CD4-positive, alpha-beta T cell (primary cell): ENCODE measurements at regions of chr11 and their contacts with region 1.

Region 1: DNA sequence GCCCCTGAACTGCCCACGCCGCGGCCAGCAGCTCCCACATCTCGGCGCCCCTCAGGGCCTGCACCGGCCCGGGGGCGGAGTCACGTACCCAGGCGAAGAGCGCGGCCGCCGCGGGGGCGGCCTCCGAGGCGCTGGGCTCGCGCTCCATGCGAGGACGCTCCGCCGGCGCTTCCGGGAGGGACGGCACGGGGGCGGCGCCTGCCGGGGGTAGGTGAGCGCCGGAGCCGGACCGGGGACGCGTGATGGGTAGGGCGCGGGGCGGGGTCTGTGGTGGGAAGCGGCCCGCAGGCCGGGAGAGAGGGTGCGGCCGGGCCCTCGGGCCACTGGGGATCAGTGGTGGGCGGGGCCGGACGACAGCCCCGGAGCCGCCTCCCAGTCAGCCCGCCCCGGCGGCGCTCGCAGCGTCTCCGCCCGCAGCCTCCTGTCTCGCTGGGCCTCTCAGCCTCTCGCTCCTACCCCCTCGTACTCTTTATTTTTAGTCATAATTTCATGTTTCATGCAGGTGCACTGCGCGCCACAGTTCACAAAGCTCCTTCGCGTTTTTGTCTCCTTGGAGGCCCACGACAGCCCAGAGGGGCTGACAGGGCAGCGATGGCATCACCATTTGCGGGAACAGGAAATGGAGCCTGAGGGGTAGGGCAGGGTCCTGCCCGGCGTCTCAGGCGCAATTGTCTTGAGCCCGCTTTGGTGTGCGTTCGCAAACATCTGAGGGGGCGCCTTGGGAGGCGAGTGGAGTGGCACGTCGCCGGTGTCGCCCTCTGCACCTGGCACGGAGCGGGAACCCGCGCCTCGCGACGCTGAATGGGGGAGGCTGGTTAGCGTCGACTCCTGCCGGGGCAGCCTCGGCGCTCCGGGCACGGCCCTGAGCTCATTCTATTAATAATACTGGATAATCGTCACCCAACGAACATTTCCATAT is at the start of gene SERGEF:
- DNase-seq: peak; percentile 79 to 97 (median 93)
- ATAC-seq: peak; percentile 80
- H3K4me3 ChIP-seq: peak within 1 kb of the TSS; percentile 98
- H3K4me3 Mint-ChIP-seq: peak within 1 kb of the TSS; percentile 98
- H3K27ac ChIP-seq: peak within 1 kb of the TSS; percentile 82 to 83
- H3K27ac Mint-ChIP-seq: peak within 1 kb of the TSS; percentile 92
- H3K4me1 ChIP-seq: peaks cover 22% of the 10 kb centered on the region
- H3K4me1 Mint-ChIP-seq: peaks cover 33% of the 10 kb centered on the region
- H3K27me3 ChIP-seq: no peaks in the 10 kb centered on the region
- H3K27me3 Mint-ChIP-seq: no peaks in the 10 kb centered on the region
- CTCF ChIP-seq: no peak
- total RNA-seq, gene SERGEF: 35.2 to 37.1 TPM

Region 2: GRCh38 chr11:16738193-16738946 is 1274.8 kb before region 1 on chr11 and contains the start of gene C11orf58:
- CTCF ChIA-PET with region 1: no interaction called
- POLR2A ChIA-PET with region 1: no interaction called
- intact Hi-C with region 1: loop called in 1 of 2 experiments (anchors 10 kb)
- DNase-seq: peak; percentile 89 to 99 (median 93)
- ATAC-seq: peak; percentile 94
- H3K4me3 ChIP-seq: peak within 1 kb of the TSS; percentile 78
- H3K4me3 Mint-ChIP-seq: peak within 1 kb of the TSS; percentile 73
- H3K27ac ChIP-seq: peak within 1 kb of the TSS; percentile 94 to 98
- H3K27ac Mint-ChIP-seq: no peak within 1 kb of the TSS
- H3K4me1 ChIP-seq: peaks cover 36% of the 10 kb centered on the region
- H3K4me1 Mint-ChIP-seq: peaks cover 24% of the 10 kb centered on the region
- H3K27me3 ChIP-seq: no peaks in the 10 kb centered on the region
- H3K27me3 Mint-ChIP-seq: no peaks in the 10 kb centered on the region
- CTCF ChIP-seq: no peak
- total RNA-seq, gene C11orf58: 145 to 150 TPM

Region 3: DNA sequence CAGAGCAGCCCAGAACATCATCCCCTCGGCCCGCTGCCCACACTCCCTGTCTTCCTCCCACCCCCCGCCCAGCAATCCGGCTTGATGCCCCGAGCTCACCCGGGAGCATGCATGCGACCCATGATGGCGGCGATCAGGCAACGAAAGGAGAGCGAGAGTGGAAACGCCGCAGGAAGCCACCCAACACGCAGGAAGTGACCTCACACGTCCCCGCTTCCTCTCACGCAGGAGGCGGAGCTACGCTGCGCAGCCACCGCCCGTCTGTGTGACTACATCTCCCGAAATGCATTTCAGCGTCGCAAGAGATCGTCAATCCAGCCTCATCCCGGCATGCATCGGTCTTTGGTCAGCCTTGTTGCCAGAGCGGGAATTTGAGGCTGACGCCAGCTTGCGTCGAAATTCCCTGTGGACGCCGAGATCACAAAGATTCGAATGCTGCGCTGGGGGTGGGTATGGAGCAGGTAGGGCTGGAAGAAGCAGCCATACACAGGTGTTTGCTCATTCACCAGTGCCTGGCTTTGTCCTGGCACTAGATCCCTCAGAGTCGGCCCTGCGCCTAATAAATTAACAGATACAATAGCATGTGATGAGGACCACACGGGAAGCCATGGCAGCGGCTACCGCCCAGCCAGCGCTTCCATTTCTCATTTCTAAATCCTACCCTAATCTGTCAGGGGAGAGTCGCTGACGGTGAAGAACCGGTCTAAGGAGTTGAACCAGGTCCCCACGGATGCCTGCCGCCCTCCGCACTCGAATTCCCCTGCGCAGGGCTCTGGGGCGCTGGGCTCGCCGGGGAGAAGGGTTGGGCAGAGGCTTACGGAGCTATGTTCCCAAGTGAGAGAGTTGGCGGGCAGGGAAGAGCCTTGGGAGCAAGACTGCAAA is 935.4 kb before region 1 on chr11 and contains the start of gene RPS13:
- CTCF ChIA-PET with region 1: no interaction called
- POLR2A ChIA-PET with region 1: no interaction called
- intact Hi-C with region 1: loop called in 1 of 2 experiments (anchors 10 kb)
- DNase-seq: peak; percentile 88 to 99 (median 92)
- ATAC-seq: peak; percentile 92
- H3K4me3 ChIP-seq: peak within 1 kb of the TSS; percentile 94
- H3K4me3 Mint-ChIP-seq: peak within 1 kb of the TSS; percentile 92
- H3K27ac ChIP-seq: peak within 1 kb of the TSS; percentile 93 to 94
- H3K27ac Mint-ChIP-seq: peak within 1 kb of the TSS; percentile 95
- H3K4me1 ChIP-seq: peaks cover 28% of the 10 kb centered on the region
- H3K4me1 Mint-ChIP-seq: peaks cover 45% of the 10 kb centered on the region
- H3K27me3 ChIP-seq: no peaks in the 10 kb centered on the region
- H3K27me3 Mint-ChIP-seq: no peaks in the 10 kb centered on the region
- CTCF ChIP-seq: no peak
- total RNA-seq, gene RPS13: 2,215 to 2,217 TPM

Region 4: DNA sequence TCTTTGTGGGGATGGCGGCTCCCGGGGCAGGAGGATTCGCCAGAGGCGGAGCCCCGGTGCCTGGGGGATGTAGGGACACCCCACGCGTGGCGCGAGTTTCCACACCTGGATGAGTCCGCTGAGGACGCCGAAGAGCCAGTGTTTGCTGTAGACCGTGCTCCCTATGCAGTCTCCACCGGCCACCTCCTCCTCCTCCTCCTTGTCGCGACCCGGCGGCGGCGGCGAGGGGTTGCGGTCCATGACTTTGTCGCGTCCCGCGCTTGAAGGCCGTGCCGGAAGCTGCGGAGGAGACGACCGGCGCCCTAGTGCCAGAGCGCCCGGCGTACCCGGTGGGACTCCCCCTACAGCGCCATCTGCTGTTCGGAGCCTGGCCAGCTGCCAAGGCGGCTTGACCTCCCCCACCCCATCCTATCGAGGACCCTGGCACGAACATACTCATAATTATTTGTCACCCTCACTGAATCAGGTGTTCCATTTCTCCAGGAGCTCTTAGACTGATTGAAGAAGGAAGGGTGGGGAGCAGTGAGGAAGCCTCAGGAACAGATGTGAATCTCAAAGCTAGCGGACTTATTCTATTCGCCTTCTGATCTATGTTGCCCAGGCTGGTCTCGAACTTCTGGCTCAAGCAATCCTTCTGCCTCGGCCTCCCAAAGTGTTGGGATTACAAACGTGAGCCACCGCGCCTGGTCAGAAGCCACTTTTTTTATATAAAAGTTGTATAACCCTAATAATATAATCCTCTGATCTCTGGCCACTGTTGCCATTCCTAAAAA is 92.9 kb after region 1 on chr11 and contains the start of gene SAAL1:
- CTCF ChIA-PET with region 1: interaction called, 15 read pairs
- POLR2A ChIA-PET with region 1: interaction called, 12 read pairs
- intact Hi-C with region 1: loop called (anchors 1 to 2 kb)
- DNase-seq: peak; percentile 81 to 93 (median 87)
- ATAC-seq: peak; percentile 99
- H3K4me3 ChIP-seq: peak within 1 kb of the TSS; percentile 98
- H3K4me3 Mint-ChIP-seq: peak within 1 kb of the TSS; percentile 98
- H3K27ac ChIP-seq: peak within 1 kb of the TSS; percentile 32 to 43
- H3K27ac Mint-ChIP-seq: peak within 1 kb of the TSS; percentile 81
- H3K4me1 ChIP-seq: peaks cover 17% of the 10 kb centered on the region
- H3K4me1 Mint-ChIP-seq: peaks cover 53% of the 10 kb centered on the region
- H3K27me3 ChIP-seq: no peaks in the 10 kb centered on the region
- H3K27me3 Mint-ChIP-seq: peaks cover 13% of the 10 kb centered on the region
- CTCF ChIP-seq: peak; percentile 89
- total RNA-seq, gene SAAL1: 21.3 to 24.5 TPM

Region 5: DNA sequence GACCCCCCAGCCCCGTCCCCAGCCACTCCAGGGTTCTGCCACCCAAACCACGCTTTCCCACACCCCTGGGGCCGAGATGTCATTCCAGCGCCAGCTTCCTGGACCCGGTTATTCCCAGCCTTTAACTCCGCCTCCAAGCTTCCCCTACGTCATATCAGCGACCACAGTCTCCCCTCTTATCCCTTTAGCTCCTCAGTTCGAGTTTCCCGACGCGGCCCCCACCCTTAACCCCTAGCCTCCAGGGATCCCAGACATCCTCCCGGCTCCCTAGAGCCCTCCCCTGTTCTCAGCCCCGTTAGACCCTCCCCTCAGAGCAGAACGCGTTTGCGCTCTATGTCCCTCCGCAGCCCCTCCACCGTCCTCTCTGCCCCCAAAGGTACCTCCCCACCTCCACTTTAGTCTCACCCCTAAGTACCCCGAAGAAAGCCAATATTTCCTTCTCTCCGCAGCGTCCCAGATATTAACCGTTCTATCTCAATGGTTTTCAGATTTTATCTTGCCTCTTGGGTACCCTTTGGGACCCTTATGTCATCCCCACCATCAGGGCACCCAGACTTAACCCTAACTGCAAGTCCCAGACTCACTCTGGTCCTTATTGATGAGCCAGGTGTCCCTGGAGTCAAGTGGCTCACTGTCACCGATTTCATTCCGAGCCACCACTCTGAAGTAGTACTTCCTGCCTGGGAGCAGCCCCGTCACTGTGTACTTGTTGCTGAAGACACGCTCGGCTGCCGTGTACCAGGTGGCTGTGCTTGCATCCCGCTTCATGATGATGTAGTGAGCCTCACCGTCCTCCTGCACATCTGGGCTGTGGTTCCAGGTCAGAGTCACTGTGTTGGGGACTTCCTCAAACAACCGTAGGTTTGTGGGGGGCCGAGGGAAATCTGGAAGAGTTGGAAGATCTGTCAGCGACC is 693.5 kb after region 1 on chr11:
- CTCF ChIA-PET with region 1: no interaction called
- POLR2A ChIA-PET with region 1: no interaction called
- intact Hi-C with region 1: loop called in 1 of 2 experiments (anchors 10 kb)
- DNase-seq: peak; percentile 37 to 84 (median 49)
- ATAC-seq: peak; percentile 90
- H3K4me3 ChIP-seq: peak overlapping the region; percentile 61
- H3K4me3 Mint-ChIP-seq: peak overlapping the region; percentile 95
- H3K27ac ChIP-seq: peak overlapping the region; percentile 23 to 50
- H3K27ac Mint-ChIP-seq: peak overlapping the region; percentile 82
- H3K4me1 ChIP-seq: peaks cover 26% of the 10 kb centered on the region
- H3K4me1 Mint-ChIP-seq: peaks cover 21% of the 10 kb centered on the region
- H3K27me3 ChIP-seq: peaks cover 0 to 3% of the 10 kb centered on the region in 2 experiments
- H3K27me3 Mint-ChIP-seq: no peaks in the 10 kb centered on the region
- CTCF ChIP-seq: no peak

Region 6: DNA sequence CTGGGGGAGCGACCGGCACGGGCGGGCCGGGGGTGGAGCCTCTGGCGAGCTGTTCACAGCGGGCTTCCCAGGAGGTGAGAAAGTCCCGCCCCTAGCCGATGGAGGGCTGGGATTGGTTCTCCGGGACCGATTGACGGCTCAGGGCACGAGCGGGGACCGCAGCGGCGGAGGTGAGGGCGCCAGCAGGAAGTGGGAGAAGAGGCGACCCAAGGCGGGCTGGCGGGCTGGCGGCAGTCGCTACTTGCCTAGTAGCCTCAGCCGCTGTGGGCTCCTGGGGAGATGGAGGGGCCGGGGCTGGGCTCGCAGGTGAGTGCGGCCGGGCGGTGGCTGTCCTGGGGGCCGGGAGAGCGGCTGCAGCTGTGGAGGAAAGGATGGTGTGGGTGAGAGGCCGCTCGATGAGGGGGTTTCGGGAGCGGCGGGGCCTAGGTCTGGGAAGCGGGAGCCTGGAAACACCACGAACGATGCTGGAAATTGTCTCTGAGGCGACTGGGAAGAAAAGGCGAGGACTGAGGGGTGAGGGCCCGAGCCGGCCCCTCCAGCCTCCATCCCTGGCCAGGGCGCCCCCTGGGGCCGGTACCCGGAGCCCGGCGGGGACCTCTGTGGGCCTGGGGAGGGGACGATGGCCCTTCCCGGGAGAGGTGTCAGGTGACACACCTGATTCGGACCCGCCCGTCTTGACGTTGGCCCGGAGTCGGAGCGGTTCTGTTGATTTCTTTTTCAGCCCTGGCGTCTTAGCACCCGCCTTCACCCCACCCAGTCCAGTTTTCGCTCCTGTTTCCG is 1104.0 kb after region 1 on chr11 and contains the start of gene ZDHHC13:
- CTCF ChIA-PET with region 1: no interaction called
- POLR2A ChIA-PET with region 1: interaction called, 3 read pairs
- intact Hi-C with region 1: loop called in 1 of 2 experiments (anchors 10 kb)
- DNase-seq: peak; percentile 84 to 97 (median 92)
- ATAC-seq: peak; percentile 99
- H3K4me3 ChIP-seq: peak within 1 kb of the TSS; percentile 94
- H3K4me3 Mint-ChIP-seq: peak within 1 kb of the TSS; percentile 92
- H3K27ac ChIP-seq: no peak within 1 kb of the TSS
- H3K27ac Mint-ChIP-seq: peak within 1 kb of the TSS; percentile 80
- H3K4me1 ChIP-seq: peaks cover 29% of the 10 kb centered on the region
- H3K4me1 Mint-ChIP-seq: peaks cover 58% of the 10 kb centered on the region
- H3K27me3 ChIP-seq: no peaks in the 10 kb centered on the region
- H3K27me3 Mint-ChIP-seq: no peaks in the 10 kb centered on the region
- CTCF ChIP-seq: no peak
- total RNA-seq, gene ZDHHC13: 3.6 to 6.6 TPM